Activated T-helper 2 cell treated with anti-CD3 and anti-CD28 coated beads, Interferon-gamma antibody, Interleukin-2, Interleukin-4, amounts not matched to agents 10 μg/mL and 5 μg/mL and 100 μg/mL, durations not matched to agents 14 hours and 24 hours and 36 hours (primary cell): ENCODE measurements at regions of chr1 and their contacts with region 1.

Region 1: DNA sequence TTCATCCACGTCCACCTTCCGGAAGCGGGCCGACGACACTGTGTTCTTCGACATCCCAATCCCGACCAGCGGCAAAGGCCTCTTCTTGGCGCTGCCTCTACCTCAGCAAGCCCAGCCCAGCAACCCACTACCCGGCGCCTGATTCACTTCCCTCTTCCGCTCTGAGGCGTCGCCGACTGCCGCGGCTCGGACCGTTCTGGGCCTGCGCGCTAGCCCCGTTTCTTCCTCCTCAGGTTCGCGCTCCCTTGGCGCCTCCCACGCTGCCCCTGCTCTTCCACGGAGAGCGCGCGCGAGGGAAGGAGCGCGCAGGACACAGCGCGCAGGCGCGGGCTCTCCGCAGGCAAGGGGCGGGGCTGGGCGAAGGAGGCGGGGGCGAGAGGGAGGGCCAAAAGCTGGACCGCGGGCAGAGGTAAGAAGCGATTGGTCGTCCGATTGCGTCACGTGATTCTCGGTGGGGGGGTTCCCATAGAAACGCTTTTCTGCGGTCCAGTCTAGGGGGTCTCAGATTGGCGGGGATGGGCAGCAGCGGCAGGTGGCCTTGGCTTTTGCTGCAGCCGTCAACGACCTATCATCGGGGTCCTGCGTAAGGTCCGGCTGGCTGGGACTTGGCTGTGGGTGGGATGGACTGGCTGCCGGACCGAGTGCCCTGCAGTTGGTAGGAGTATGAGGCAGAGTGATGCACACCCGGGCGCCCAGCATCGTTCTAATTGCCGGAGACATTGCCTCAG is at the start of gene ARPC5:
- DNase-seq: peak; percentile 96
- H3K4me3 Mint-ChIP-seq: peak within 1 kb of the TSS; percentile 100
- H3K27ac Mint-ChIP-seq: peak within 1 kb of the TSS; percentile 100
- H3K4me1 Mint-ChIP-seq: peaks cover 34% of the 10 kb centered on the region
- H3K27me3 Mint-ChIP-seq: peaks cover 11% of the 10 kb centered on the region
- total RNA-seq, gene ARPC5: 160 and 169 TPM in 2 replicates

Region 2: DNA sequence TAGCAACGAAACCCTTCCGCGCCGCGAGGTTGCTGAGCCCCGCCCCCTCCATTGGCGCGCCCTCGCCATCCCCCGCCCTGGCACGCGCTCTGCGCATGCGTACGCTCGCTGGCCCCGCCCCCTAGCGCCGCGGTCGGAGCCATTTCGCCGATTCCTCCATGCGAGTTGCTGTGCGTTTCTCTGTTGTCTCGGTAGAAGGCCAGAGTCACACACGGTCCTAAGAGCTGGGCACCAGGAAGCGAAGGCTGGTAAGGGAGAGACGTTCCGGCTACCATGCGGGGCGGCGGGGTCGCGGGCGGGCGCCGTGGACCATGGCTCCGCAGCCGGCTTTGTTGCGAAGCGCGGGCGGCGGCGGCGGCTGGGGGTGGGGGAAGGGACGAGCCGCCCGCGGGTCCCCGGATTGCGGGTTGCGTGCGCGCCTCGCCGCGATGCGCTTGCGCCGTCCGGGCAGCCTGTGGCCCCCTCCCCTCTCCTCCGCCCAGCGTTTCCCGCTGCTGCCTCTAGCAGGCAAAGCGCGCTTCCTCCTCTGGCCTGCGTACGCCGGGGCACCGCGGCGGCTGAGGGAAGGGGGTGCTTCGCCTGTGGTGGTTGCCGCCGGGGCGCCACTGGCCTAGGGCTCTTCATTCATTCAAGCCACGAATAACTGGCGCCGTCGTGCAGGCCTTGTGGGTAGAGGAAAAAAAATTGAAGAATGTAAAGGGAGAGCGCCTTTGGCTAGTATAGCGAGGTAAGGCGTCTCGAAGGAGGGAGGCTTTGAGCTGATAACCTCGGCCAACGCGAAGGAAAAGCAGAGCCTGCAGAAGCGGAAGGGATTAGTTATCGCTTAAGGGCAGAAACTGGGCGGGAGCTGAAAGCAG is 796.3 kb before region 1 on chr1 and contains the start of gene DHX9:
- intact Hi-C with region 1: loop called (anchors 10 kb)
- DNase-seq: peak; percentile 93
- H3K4me3 Mint-ChIP-seq: peak within 1 kb of the TSS; percentile 96
- H3K27ac Mint-ChIP-seq: peak within 1 kb of the TSS; percentile 98
- H3K4me1 Mint-ChIP-seq: peaks cover 41% of the 10 kb centered on the region
- H3K27me3 Mint-ChIP-seq: peaks cover under 1% of the 10 kb centered on the region
- total RNA-seq, gene DHX9: 302 and 322 TPM in 2 replicates

Region 3: DNA sequence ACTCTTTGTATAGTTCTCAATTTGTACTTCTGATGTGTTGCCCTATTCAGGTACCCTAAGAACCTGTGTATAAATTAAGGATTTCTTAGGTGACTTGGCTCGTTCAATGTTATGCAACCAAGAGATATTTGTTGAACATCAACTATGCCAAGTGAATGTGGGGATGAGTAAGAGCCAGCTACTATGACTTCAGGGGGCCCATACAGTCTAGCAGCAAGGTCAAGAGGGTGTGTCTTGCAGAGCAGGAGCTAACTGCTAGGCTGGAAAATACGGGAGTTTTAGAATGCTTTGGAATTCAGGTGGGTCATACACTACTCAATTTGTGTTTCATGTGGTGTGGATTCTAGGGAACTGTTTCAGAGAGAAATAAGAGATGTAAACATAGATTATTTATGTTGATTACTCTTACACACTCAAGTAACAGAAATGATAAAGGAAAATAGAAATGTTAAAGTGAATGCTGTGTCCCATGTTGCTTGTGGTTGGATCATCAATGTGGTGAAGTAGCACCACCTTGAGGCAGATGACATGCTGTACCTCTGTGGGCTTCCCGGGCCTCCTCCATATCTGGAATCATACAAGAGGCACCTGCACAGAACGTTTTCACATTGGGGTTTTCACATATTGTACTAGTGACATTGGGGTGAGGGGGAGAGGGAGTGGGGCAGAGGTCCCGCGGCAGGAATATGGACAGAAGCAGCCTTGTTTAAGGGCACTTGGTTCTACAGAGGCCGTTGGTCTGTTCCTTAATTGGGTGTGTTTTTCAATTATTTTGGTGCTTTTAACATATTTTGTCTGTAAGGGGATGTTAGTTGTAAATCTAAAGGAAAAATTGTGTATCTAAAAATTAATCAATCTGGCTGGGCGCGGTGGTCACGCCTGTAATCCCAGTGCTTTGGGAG is 12.6 kb before region 1 on chr1:
- intact Hi-C with region 1: no loop called
- DNase-seq: peak; percentile 28
- H3K4me3 Mint-ChIP-seq: no peak overlapping the region
- H3K27ac Mint-ChIP-seq: peak overlapping the region; percentile 11
- H3K4me1 Mint-ChIP-seq: peaks cover 14% of the 10 kb centered on the region
- H3K27me3 Mint-ChIP-seq: no peaks in the 10 kb centered on the region

Region 4: DNA sequence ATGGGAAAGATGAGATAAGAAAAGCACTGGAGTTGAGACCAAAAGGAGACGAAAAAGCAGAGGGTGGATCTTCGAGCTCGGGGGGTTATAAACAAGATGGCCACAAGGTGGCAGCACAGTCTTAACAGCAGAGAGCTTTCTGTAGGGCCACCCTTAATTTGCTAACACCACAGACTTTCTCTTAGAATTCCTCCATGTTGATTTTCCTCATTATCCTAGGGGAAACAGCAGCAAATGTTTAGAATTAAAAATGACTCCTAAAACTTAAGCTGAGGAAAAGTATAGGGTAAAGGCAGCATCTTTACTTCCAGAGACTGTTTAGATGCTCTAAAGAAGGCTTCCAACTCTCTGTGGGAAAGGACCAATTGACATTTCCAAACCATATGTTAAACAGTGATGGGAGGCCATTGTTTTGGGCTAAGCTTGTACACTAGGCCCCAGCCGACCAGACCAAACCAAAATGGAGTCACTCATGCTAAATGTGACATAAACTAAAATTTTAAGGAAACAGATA is 19.8 kb after region 1 on chr1:
- intact Hi-C with region 1: loop called (anchors 1 kb)
- DNase-seq: peak; percentile 44
- H3K4me3 Mint-ChIP-seq: no peak overlapping the region
- H3K27ac Mint-ChIP-seq: no peak overlapping the region
- H3K4me1 Mint-ChIP-seq: peaks cover 38% of the 10 kb centered on the region
- H3K27me3 Mint-ChIP-seq: no peaks in the 10 kb centered on the region

Region 5: DNA sequence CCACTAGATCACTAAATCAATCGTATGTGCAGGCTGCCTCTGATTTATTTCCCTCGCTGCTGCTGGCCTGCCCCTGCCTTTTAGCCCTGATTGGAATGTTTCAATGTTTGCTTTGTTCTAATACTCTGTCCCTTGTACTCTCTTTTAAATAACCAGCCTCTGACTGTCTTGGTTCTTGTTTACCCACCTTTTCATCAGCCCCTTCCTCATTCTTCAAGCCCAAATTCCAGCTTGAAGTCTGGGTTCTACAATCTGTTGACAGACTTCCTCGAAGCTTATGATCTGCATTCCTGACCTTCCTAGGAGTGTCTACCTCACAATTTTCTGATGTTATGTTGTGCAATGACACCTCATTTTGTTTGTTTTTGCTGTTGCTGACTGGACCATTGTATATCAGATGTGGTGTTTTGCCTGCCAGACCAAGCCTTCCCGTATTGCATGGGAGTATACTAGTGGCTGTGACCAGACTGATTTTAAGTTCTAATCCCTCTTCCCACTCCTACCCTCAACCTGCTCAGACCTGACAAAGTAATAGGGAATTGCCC is 63.9 kb after region 1 on chr1:
- intact Hi-C with region 1: no loop called
- DNase-seq: no peak
- H3K4me3 Mint-ChIP-seq: no peak overlapping the region
- H3K27ac Mint-ChIP-seq: no peak overlapping the region
- H3K4me1 Mint-ChIP-seq: peaks cover 9% of the 10 kb centered on the region
- H3K27me3 Mint-ChIP-seq: no peaks in the 10 kb centered on the region

Region 6: GRCh38 chr1:184036517-184036949 is 400.8 kb after region 1 on chr1:
- intact Hi-C with region 1: loop called (anchors 10 kb)
- DNase-seq: no peak
- H3K4me3 Mint-ChIP-seq: peak overlapping the region; percentile 48
- H3K27ac Mint-ChIP-seq: no peak overlapping the region
- H3K4me1 Mint-ChIP-seq: peaks cover 19% of the 10 kb centered on the region
- H3K27me3 Mint-ChIP-seq: peaks cover 74% of the 10 kb centered on the region

Region 7: DNA sequence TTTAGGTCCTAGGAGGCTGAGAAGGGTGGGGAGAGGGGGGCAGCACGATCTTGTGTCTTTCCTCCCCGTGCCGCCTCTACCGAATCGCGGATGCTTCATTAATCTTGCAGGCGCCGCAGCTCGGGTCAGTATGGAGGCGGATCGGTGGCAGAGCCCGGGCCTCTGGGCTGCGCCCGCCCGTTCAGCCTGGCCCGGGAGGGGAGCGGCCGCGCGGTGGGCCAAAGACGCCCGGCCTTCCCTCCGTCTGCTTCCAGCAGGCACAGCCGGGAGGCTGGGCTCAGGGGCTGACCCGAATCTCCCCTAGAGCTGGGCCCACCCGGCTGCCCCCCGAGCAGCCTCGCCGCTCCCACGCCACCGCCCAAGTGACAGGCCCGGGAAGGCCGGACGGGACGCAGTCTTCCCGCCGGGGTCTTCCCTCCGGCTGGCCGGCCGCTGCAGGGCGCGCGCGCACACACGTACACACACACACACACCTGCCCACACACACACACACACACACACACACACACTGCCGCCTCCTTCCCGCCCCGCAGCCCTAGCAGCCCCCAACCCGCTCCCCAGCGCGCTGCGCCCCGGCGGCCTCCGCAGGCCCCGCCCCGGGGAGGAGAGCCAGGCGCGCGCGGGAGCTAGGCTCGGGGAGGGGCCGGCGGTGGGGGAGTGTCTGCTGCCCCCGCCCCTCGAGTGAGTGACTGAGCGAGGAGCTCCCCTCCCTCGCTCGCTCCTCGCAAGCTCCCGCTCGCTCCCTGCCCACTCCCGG is 750.7 kb after region 1 on chr1 and contains the start of gene C1orf21:
- intact Hi-C with region 1: loop called (anchors 2 kb)
- DNase-seq: peak; percentile 70
- H3K4me3 Mint-ChIP-seq: peak within 1 kb of the TSS; percentile 87
- H3K27ac Mint-ChIP-seq: peak within 1 kb of the TSS; percentile 70
- H3K4me1 Mint-ChIP-seq: peaks cover 22% of the 10 kb centered on the region
- H3K27me3 Mint-ChIP-seq: peaks cover 76% of the 10 kb centered on the region
- total RNA-seq, gene C1orf21: 3.4 and 4.2 TPM in 2 replicates